ENCODE measurements at regions of chr19 and their contacts with region 1.

Region 1: GRCh38 chr19:41515015-41515652 is 60.8 kb upstream of the CEACAM21 start:
- DNase-seq: no peak
- H3K4me3 Mint-ChIP-seq: no peak overlapping the region
- H3K27ac Mint-ChIP-seq: no peak overlapping the region
- H3K4me1 Mint-ChIP-seq: peaks cover 16% of the 10 kb centered on the region
- H3K27me3 Mint-ChIP-seq: peaks cover 36% of the 10 kb centered on the region

Region 2: GRCh38 chr19:41233748-41234240 is 281.3 kb before region 1 on chr19:
- intact Hi-C with region 1: no loop called
- DNase-seq: no peak
- H3K4me3 Mint-ChIP-seq: no peak overlapping the region
- H3K27ac Mint-ChIP-seq: no peak overlapping the region
- H3K4me1 Mint-ChIP-seq: no peaks in the 10 kb centered on the region
- H3K27me3 Mint-ChIP-seq: no peaks in the 10 kb centered on the region

Region 3: DNA sequence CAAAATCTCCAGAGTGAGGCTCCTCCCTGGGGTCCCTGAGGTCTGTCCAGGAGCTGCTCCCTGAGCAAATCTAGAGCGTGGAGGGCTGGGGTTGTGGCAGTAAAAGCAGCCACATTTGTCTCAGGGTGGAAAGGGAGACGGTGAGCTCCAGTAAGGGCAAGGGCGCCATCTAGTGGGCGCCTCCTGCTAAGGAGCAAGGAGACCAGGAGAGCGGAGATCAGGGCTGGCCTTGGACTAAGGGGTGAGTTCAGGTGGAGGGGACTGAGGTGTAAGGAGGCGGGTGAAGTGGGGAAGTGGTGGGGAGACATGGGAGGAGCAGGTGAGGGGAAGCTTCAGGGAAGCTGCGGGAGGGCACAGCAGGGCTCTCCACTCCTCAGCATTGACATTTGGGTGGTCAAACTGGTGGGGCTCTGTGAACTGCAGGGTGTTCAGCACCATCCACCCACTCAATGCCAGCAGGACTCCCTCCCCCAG is 55.5 kb after region 1 on chr19:
- intact Hi-C with region 1: loop called (anchors 1 kb)
- DNase-seq: peak; percentile 95
- H3K4me3 Mint-ChIP-seq: no peak overlapping the region
- H3K27ac Mint-ChIP-seq: peak overlapping the region; percentile 60
- H3K4me1 Mint-ChIP-seq: peaks cover 22% of the 10 kb centered on the region
- H3K27me3 Mint-ChIP-seq: no peaks in the 10 kb centered on the region

Region 4: DNA sequence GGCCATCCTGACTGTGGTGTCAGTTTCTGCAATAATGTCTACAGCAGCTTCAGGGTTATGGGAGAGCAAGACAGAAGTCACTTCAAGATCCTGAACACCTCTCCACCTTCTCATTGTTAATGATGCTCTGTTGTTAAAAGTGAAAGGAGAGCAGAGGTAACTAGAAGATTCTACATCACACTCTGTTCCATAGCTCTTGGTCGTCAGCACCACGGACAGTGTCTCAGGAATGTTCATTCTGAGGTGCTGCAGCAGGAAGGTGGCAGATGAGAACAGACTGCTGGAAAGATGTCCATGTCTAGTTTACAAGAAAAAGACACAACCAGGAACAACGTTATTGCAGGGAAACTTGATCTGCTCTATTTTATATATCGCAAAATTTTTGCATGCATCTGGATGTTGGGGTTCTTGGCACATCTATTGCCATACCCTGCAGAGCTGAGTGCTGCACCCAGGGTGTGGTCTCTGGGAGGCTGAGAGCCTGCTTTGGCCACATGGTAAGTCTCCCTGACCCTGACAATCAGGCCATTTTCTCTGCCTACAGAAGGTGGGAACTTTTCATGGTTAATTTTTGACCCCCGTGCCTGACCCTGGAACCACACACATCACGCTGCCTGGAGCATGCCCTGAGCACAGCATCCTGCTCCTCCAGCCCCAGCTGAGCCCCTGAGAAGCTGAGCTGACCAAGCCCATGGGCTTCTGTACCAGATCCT is 73.5 kb after region 1 on chr19:
- intact Hi-C with region 1: no loop called
- DNase-seq: peak; percentile 80
- H3K4me3 Mint-ChIP-seq: no peak overlapping the region
- H3K27ac Mint-ChIP-seq: no peak overlapping the region
- H3K4me1 Mint-ChIP-seq: peaks cover 3% of the 10 kb centered on the region
- H3K27me3 Mint-ChIP-seq: peaks cover 3% of the 10 kb centered on the region